ENCODE measurements at regions of chr4 and their contacts with region 1.

Region 1: GRCh38 chr4:100742045-100742444 is 224.2 kb upstream of the EMCN start:
- DNase-seq: peak in 1 of 2 donors; percentile 9
- ATAC-seq: no peak
- H3K4me3 ChIP-seq: no peak overlapping the region
- H3K27ac ChIP-seq: no peak overlapping the region
- H3K4me1 ChIP-seq: peaks cover 0 to 19% (median 11%) of the 10 kb centered on the region in 9 donors
- H3K27me3 ChIP-seq: no peaks in the 10 kb centered on the region
- CTCF ChIP-seq: peak; percentile 28 to 71 (median 50)

Region 2: GRCh38 chr4:100093091-100093866 is 648.8 kb before region 1 on chr4:
- intact Hi-C with region 1: loop called in 5 of 10 experiments (anchors 5 to 10 kb)
- DNase-seq: peak; percentile 51 to 83
- ATAC-seq: peak; percentile 77 to 97 (median 89)
- H3K4me3 ChIP-seq: no peak overlapping the region
- H3K27ac ChIP-seq: peak overlapping the region in 6 of 10 donors; percentile 3 to 34 (median 16)
- H3K4me1 ChIP-seq: peaks cover 5 to 32% (median 14%) of the 10 kb centered on the region in 9 donors
- H3K27me3 ChIP-seq: no peaks in the 10 kb centered on the region
- CTCF ChIP-seq: peak; percentile 65 to 91 (median 85)

Region 3: GRCh38 chr4:100430451-100430850 is 311.6 kb before region 1 on chr4:
- intact Hi-C with region 1: loop called in 1 of 10 experiments (anchors 5 kb)
- DNase-seq: no peak
- ATAC-seq: peak in 1 of 8 donors; percentile 57
- H3K4me3 ChIP-seq: no peak overlapping the region
- H3K27ac ChIP-seq: no peak overlapping the region
- H3K4me1 ChIP-seq: peaks cover 0 to 18% (median 0%) of the 10 kb centered on the region in 9 donors
- H3K27me3 ChIP-seq: no peaks in the 10 kb centered on the region
- CTCF ChIP-seq: no peak

Region 4: DNA sequence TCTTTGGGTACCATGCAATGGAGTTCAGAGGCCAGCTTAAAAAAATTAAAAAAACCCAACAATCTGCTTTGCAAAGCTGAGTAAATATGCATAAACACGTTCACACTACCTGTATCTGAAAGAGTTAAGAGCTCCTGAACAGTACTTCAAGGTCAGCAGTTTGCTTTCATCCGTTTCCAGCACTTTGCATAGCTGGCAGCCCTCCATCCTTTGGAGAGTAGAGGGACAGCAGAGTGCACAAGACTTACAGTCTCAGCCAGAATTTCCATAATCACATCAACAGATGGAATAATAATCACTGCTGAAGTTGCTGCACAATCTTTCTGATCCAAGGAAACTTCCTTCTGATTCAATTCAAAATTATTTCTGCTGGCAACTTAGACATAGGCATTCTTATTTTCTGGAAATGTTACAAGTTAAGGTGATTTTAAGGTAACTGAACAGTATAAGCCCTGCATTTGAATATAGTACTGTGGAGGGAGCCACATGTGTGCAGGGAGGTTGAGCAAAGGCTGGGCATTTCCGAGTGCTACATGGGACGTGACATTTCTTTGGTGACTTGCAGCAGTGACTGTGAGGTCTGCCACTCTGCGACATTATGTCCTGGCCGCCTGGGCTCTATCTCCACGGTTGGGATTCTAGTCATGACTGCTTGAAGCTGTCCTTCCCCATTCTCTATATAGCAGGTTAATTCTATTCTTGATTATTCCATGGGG is 150.7 kb before region 1 on chr4:
- intact Hi-C with region 1: loop called in 2 of 10 experiments (anchors 5 to 10 kb)
- DNase-seq: peak; percentile 32 to 82
- ATAC-seq: peak; percentile 70 to 97 (median 93)
- H3K4me3 ChIP-seq: peak overlapping the region in 1 of 10 donors; percentile 5
- H3K27ac ChIP-seq: peak overlapping the region in 2 of 10 donors; percentile 41 to 50
- H3K4me1 ChIP-seq: peaks cover 0 to 29% (median 11%) of the 10 kb centered on the region in 9 donors
- H3K27me3 ChIP-seq: no peaks in the 10 kb centered on the region
- CTCF ChIP-seq: no peak

Region 5: DNA sequence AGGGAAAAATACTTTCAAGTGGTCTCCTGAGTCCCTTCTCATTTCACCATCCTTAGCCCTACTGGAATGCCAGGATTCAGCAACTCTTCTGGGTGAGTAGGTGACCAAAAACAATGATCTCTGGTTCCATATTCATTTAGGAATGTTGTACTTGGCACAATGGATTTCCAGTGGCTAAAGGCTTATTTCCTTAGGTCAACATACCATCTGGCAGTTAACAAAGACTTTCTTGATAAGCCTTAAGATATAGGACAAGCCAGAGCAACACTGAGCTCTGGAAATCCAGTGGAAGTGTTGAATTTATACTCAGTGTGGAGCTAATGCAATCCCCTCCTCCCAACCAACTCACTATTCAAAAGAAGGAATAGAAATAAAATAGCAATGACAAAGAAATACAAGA is 84.9 kb before region 1 on chr4:
- intact Hi-C with region 1: loop called in 1 of 10 experiments (anchors 5 kb)
- DNase-seq: peak in 1 of 2 donors; percentile 3
- ATAC-seq: peak in 7 of 8 donors; percentile 29 to 83 (median 75)
- H3K4me3 ChIP-seq: no peak overlapping the region
- H3K27ac ChIP-seq: peak overlapping the region in 2 of 10 donors; percentile 10 to 16
- H3K4me1 ChIP-seq: peaks cover 0 to 27% (median 0%) of the 10 kb centered on the region in 9 donors
- H3K27me3 ChIP-seq: no peaks in the 10 kb centered on the region
- CTCF ChIP-seq: no peak

Measured in heart right ventricle (tissue), 16 donors.